PC-9 (cell line): ENCODE measurements at regions of chr1 and their contacts with region 1.

Region 1: DNA sequence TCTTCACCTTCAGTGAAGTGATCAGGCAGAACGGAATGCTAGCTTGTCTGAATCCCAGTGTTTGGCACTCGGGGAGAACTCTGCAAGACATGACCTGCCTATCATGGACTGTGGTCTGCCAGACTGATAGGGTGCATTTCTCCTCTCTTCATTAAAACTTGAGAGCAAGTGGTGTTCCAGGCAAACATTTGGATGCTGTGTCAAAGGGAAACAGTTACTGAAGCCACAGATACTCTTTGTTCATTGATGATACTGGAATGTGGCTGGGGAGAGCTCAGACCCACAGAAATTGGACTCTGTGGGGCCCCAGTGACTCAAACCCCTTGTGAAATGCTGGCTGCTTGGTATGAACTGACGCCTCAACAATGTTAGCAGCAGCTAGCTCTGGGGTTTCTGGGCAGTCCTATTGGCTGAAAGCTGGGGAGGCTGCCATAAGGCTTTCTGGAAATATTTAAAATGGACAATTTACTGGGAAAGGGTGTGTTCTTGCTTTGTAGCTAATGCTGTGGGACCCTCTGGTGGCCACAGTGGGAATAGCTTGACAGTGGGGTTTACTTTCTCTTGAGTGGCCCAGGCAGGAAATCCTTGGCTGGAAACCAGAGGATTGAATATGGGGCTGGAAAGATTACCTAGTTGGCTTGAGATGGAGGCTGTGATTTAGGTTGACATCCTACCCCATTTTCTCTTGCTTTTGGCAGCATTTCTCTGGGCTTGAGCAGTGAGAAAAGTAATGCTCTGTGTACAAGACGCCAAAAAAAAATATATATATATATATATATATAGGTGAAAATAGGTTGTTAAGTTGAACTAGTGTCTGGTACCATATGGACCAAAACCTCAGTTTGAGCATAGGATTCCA is 8.0 kb upstream of the S100A10 start:
- DNase-seq: peak; percentile 87 to 93
- H3K4me3 ChIP-seq: no peak overlapping the region
- H3K27ac ChIP-seq: peak overlapping the region; percentile 90
- H3K4me1 ChIP-seq: peaks cover 57% of the 10 kb centered on the region
- H3K27me3 ChIP-seq: no peaks in the 10 kb centered on the region
- CTCF ChIP-seq: peak; percentile 94

Region 2: DNA sequence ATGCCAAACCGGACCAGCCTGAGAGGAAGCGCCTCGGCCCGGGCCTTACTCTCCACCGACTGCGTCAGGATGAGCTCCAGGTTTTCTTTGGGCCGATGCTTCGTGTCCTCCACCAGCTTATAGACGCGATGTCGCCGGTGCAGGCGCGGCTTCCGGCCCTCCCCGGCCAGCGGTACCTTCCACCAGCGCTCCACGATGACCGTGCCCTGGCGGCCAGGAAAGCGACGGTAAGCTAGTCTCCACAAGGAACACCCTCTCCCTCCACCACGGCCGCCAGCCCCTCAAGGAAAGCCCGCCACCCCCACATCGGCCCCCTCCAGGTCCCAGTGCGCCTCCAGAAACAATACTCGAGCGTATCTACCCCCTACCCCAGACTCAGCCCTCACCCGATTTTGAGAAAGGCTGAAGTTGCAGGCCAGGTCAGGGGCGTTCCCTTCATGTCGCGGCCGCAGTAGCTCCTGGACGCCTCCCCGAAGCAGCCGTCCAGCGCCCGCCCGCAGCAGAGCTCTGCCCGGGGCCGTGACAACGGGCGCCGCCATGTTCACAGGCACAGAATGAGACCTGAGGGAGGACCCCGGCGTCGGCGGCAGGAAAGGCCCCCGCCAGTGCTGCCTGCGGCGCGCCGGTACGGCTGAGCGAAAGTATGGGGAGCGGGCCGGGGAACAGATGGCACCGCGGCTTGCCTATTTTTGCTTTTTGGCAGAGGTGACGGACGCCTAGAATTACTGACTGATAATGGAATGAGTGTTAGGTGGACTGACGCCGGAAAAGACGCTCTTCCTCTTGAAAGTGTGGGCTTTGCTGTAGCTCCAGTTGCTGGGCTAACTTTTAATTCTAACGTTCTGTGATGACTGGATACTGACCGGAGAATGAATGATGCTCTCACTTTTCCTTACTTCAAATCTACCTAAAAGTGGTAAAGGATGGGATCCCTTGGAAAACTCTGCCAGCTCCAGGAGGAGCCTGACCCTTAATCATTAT is 238.4 kb before region 1 on chr1 and contains the start of gene MRPL9:
- CTCF ChIA-PET with region 1: no interaction called
- POLR2A ChIA-PET with region 1: no interaction called
- intact Hi-C with region 1: loop called (anchors 10 kb)
- DNase-seq: peak; percentile 56 to 72
- H3K4me3 ChIP-seq: peak within 1 kb of the TSS; percentile 83
- H3K27ac ChIP-seq: peak within 1 kb of the TSS; percentile 66
- H3K4me1 ChIP-seq: peaks cover 29% of the 10 kb centered on the region
- H3K27me3 ChIP-seq: no peaks in the 10 kb centered on the region
- CTCF ChIP-seq: no peak
- total RNA-seq, gene MRPL9: 80.9 and 132 TPM in 2 replicates

Region 3: DNA sequence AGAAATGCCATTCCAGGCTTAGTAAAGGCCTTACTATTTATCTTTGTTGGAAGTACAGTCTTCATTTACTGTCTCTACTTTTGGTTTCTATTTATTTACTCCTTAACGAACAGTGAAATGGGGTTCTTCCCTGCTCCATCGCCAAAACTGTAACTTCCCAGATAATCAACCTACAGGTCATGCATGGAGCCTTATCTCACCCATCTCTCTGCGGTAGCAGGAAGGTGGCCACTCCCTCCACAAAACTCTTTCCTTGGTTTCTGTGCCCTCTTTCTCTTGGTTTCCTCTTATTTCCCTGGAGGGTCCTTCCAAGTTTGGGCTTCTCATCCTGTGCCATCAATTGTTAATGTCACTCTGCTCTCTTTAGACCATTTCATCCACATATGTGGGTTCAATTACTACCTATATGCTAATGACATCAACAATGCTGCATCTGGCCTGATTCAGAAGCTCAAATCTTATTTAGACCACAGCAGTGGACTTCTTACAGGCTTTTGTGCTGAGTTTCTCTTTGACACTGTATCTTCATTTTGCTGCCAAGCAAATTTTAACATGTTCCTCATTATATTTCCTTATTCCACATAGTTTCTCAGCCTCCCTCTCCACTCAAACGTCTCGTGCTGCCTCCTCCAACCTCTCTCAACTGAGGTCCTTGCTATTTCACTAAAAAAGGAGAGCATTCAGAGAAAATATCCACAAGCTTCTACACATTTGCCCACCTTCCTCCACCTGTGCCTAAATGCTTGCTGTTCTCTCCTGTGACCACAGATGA is 218.0 kb before region 1 on chr1:
- CTCF ChIA-PET with region 1: no interaction called
- POLR2A ChIA-PET with region 1: no interaction called
- intact Hi-C with region 1: no loop called
- DNase-seq: no peak
- H3K4me3 ChIP-seq: no peak overlapping the region
- H3K27ac ChIP-seq: no peak overlapping the region
- H3K4me1 ChIP-seq: no peaks in the 10 kb centered on the region
- H3K27me3 ChIP-seq: no peaks in the 10 kb centered on the region
- CTCF ChIP-seq: no peak

Region 4: GRCh38 chr1:151881456-151881855 is 120.2 kb before region 1 on chr1:
- CTCF ChIA-PET with region 1: no interaction called
- POLR2A ChIA-PET with region 1: no interaction called
- intact Hi-C with region 1: no loop called
- DNase-seq: no peak
- H3K4me3 ChIP-seq: no peak overlapping the region
- H3K27ac ChIP-seq: no peak overlapping the region
- H3K4me1 ChIP-seq: no peaks in the 10 kb centered on the region; the same call in 1 of the 2 replicates
- H3K27me3 ChIP-seq: no peaks in the 10 kb centered on the region
- CTCF ChIP-seq: no peak

Region 5: GRCh38 chr1:151909150-151910149 is 92.2 kb before region 1 on chr1 and contains the start of gene THEM4:
- CTCF ChIA-PET with region 1: no interaction called
- POLR2A ChIA-PET with region 1: interaction called, 6 read pairs
- intact Hi-C with region 1: loop called (anchors 1 kb)
- DNase-seq: peak; percentile 87 to 98
- H3K4me3 ChIP-seq: peak within 1 kb of the TSS; percentile 78
- H3K27ac ChIP-seq: peak within 1 kb of the TSS; percentile 84
- H3K4me1 ChIP-seq: peaks cover 30% of the 10 kb centered on the region
- H3K27me3 ChIP-seq: no peaks in the 10 kb centered on the region
- CTCF ChIP-seq: no peak
- total RNA-seq, gene THEM4: 24.1 and 41.4 TPM in 2 replicates

Region 6: GRCh38 chr1:151945725-151946364 is 55.8 kb before region 1 on chr1:
- CTCF ChIA-PET with region 1: interaction called, 3 read pairs
- POLR2A ChIA-PET with region 1: no interaction called
- intact Hi-C with region 1: loop called (anchors 2 kb)
- DNase-seq: peak; percentile 96 to 97
- H3K4me3 ChIP-seq: peak overlapping the region; percentile 35; the same call in 1 of the 2 replicates
- H3K27ac ChIP-seq: peak overlapping the region; percentile 91
- H3K4me1 ChIP-seq: peaks cover 72% of the 10 kb centered on the region
- H3K27me3 ChIP-seq: no peaks in the 10 kb centered on the region
- CTCF ChIP-seq: no peak

Region 7: GRCh38 chr1:152034646-152035405 is 33.2 kb after region 1 on chr1:
- CTCF ChIA-PET with region 1: interaction called, 9 read pairs
- POLR2A ChIA-PET with region 1: interaction called, 22 read pairs
- intact Hi-C with region 1: loop called (anchors 1 kb)
- DNase-seq: peak; percentile 78 to 90
- H3K4me3 ChIP-seq: peak overlapping the region; percentile 89
- H3K27ac ChIP-seq: peak overlapping the region; percentile 97
- H3K4me1 ChIP-seq: peaks cover 66% of the 10 kb centered on the region
- H3K27me3 ChIP-seq: no peaks in the 10 kb centered on the region
- CTCF ChIP-seq: peak; percentile 94

Region 8: GRCh38 chr1:152227310-152227928 is 225.8 kb after region 1 on chr1:
- CTCF ChIA-PET with region 1: no interaction called
- POLR2A ChIA-PET with region 1: no interaction called
- intact Hi-C with region 1: no loop called
- DNase-seq: no peak
- H3K4me3 ChIP-seq: no peak overlapping the region
- H3K27ac ChIP-seq: no peak overlapping the region
- H3K4me1 ChIP-seq: no peaks in the 10 kb centered on the region
- H3K27me3 ChIP-seq: peaks cover 11% of the 10 kb centered on the region
- CTCF ChIP-seq: no peak; the same call in 1 of the 2 replicates